ENCODE measurements at regions of chr19 and their contacts with region 1.

Region 1: GRCh38 chr19:35612559-35613321 is at the start of gene HAUS5:
- DNase-seq: peak; percentile 98
- H3K4me3 Mint-ChIP-seq: peak within 1 kb of the TSS; percentile 83
- H3K27ac Mint-ChIP-seq: peak within 1 kb of the TSS; percentile 81
- H3K4me1 Mint-ChIP-seq: peaks cover 31% of the 10 kb centered on the region
- H3K27me3 Mint-ChIP-seq: peaks cover 1% of the 10 kb centered on the region
- total RNA-seq, gene HAUS5: 36.6 to 43.1 TPM

Region 2: DNA sequence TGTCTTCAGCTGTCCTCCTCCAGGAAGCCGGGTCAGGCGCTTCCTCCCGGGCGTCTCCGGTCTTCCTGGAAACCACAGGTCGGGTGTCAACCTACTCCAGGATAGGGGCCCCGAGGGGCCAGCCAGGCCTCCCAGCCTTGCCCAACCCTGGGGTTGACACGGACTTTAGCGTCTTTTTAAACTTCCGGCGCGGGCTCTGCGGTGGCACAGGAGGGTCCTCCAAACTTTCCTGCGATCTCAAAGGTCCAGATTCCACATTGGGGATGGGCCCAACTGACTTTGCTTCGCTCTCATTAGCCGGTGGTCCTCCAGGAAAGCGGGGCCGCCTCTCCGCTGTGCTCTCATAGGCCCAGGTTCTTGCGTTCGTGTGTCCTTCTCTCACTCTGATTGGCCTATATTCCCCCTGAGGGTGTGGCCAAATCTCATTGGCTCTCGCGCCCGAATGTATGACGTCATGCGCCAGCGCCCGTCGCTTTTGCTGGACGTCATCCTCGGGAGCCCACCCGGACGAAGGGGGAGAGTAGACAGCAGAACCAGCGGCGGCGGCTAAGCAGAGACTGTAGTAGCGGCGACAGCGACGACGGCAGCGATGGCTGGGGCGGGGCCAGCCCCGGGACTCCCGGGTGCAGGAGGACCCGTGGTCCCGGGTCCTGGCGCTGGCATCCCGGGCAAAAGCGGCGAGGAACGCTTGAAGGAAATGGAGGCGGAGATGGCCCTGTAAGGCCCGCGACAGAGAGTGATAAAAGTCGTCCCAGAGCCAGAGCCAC is 16.0 kb after region 1 on chr19 and contains the start of gene RBM42:
- CTCF ChIA-PET with region 1: interaction called, 3 read pairs
- POLR2A ChIA-PET with region 1: no interaction called
- intact Hi-C with region 1: loop called (anchors 1 kb)
- DNase-seq: peak; percentile 98
- H3K4me3 Mint-ChIP-seq: peak within 1 kb of the TSS; percentile 99
- H3K27ac Mint-ChIP-seq: peak within 1 kb of the TSS; percentile 90
- H3K4me1 Mint-ChIP-seq: peaks cover 16% of the 10 kb centered on the region
- H3K27me3 Mint-ChIP-seq: no peaks in the 10 kb centered on the region
- total RNA-seq, gene RBM42: 86.4 to 88.0 TPM

Measured in activated CD4-positive, alpha-beta memory T cell treated with anti-CD3 and anti-CD28 coated beads for 36 hours (primary cell).